Mammary epithelial cell (primary cell): ENCODE measurements at regions of chr17 and their contacts with region 1.

Region 1: DNA sequence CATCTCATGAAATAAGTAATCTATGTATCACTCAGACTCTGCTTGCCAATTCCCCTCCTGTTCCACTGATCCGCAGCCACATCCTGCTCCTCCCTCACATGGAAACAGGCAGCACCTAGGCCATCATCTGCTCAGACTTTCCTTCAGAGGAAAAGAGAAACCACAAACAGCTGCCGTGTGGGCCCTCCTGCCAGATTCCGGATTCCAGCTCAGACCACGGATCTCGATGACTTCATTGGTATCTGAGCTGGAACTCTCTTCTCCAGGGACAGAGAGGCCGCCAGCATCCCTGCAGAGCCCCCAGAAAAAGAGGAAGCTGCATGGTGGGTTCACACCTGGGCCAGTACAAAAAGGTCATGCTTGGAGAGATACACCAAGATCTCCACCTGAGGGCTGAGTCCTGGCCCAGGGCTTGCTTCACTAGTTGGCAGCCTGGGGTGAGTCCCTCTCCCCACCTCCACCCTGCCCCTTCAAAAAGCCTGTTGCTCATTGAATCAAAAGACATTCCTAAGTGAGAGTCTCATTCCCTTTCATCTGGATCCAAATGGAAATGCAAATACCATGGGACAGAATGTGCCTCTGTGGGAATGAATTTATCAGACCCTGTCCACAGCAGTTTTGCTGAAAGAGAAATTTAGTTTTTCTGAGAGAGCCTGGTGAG is 47.2 kb downstream of the HOXB1 start:
- DNase-seq: peak; percentile 99
- H3K4me3 ChIP-seq: no peak overlapping the region
- H3K27ac ChIP-seq: peak overlapping the region; percentile 83
- H3K4me1 ChIP-seq: peaks cover 65% of the 10 kb centered on the region
- H3K27me3 ChIP-seq: no peaks in the 10 kb centered on the region
- CTCF ChIP-seq: no peak

Region 2: DNA sequence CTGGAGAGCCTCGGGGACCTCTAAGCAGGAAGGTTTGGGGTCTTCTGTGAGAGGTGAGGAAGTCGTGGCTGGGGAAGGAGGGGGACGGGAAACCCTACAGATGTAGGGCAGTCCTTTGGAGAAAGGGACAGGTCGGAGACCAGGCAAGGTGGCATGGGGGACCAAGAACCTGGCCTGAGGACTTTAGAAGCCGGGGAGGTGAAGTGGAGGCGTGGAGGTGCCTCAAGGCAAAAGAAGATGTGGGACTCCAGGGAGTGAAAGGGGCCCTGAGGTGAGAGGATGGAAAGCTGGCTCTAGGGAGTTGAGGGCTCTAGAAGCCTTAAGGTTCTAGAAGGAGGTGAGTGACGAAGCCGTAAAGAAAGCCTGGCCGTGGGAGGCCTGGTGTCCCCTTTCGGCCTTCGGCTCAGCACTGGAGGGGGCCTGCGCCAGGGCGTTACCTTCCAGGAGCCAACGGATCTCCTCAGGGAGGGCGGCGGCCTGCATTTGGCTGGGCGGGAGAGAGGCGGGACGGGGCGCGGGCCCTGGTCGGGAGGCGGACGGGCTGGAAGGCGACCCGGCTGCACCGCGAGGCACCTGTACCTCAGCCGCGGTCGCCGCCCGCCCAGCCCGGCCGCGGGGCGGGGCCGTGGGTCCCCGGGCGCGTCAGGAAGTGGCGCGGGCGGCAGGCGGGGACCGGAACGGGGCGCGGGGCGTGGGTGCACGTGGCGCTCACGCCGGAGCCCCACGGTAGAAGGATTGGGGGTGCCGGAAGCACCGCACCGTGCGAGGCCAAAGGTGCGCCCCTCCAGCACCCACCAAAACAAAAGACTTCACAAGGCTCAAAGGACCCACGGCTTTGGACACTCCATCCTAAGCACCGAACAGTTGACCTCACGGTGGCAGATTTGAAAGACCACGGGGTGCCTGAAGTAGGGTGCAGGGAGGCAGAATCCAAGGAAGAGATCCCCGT is 53.7 kb before region 1 on chr17 and contains the start of gene SKAP1:
- CTCF ChIA-PET with region 1: no interaction called
- dilution Hi-C with region 1: no loop called
- in situ Hi-C with region 1: no loop called
- intact Hi-C with region 1: no loop called
- DNase-seq: no peak
- H3K4me3 ChIP-seq: peak within 1 kb of the TSS in 1 of 3 experiments; percentile 22
- H3K27ac ChIP-seq: no peak within 1 kb of the TSS
- H3K4me1 ChIP-seq: peaks cover 6% of the 10 kb centered on the region
- H3K27me3 ChIP-seq: peaks cover 3% of the 10 kb centered on the region
- CTCF ChIP-seq: no peak
- total RNA-seq, gene SKAP1: not detected

Region 3: DNA sequence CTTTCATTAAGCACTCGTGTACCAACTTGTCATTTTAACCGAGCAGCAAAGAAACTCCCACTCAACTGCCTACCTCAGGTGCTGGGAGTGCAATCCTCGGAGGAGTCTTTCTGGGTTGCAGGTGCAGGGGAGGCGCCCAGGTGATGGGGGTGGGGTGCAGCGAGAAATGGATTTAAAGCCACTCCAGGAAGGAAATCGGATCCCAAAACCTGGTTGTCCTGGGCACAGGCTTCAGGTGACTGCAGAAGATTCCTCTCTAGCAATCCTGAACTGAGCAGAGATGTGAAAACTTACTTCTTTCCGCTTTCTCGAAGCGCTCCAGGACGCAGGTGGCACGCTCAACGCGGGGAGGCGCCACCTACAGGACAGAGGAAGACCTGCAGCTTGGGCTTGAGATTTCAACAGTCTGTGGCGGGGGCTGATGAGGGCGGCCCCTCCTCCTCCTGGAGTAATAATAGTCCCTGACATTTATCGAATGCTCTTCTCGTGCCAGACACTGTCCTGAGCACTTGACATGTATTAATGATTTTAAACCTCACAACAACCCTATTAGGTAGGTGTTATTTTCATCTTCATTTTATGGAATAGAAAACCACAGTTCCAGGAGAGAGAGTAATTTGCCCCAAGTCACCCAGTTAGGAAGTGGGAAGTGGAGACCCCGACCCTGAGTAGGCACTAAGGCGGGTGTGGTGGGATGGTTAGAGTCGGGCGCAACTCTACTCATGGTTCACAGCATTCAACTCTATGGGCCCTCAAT is 26.3 kb before region 1 on chr17:
- CTCF ChIA-PET with region 1: no interaction called
- dilution Hi-C with region 1: no loop called
- in situ Hi-C with region 1: no loop called
- intact Hi-C with region 1: loop called (anchors 2 kb)
- DNase-seq: peak; percentile 42
- H3K4me3 ChIP-seq: peak overlapping the region in 2 of 3 experiments; percentile 19 to 28
- H3K27ac ChIP-seq: no peak overlapping the region
- H3K4me1 ChIP-seq: peaks cover 12% of the 10 kb centered on the region
- H3K27me3 ChIP-seq: no peaks in the 10 kb centered on the region
- CTCF ChIP-seq: peak; percentile 94

Region 4: DNA sequence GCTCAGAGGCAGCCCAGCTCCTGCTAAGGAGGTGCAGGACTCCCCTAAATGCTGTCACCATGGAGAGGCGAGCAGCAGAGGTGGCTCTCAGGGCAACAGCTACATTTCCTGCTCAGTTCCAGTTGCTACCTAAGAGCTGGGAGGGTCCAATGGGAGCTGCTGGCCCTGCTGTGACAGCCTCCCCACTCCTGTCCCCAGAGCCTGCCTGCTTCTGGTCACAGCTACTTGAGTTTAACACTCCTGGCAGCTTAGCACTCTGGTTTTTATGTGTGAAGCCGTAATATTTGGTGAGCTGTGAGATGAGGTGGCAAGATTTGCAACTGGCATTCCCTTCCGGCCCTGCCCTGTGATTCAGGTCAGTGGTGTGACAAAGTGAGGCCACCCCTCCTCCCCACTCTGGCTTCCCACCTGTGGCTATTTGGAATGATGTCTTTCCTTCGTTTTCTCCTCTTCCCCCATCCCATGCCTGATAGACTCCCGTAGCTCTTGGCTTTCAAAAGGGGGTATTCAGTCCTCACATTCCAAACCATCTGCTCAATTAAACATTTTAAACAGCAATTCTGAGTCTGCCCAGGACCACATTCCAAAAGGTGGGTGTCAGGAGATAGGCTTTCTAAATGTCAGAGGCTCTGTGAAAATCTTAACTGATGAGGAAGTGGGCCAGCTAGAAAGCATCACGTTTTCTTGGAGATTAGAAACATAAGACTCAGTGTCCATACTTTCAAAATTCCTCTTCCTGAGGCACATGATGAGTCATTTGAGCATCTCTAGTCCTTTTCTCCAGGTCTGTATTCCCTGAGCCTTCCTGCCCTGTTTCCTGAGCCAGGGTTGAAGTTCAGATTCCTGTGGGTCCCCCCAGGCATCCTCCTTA is 11.0 kb before region 1 on chr17:
- CTCF ChIA-PET with region 1: no interaction called
- dilution Hi-C with region 1: no loop called
- in situ Hi-C with region 1: no loop called
- intact Hi-C with region 1: loop called (anchors 1 kb)
- DNase-seq: peak; percentile 67
- H3K4me3 ChIP-seq: no peak overlapping the region
- H3K27ac ChIP-seq: peak overlapping the region; percentile 56
- H3K4me1 ChIP-seq: peaks cover 19% of the 10 kb centered on the region
- H3K27me3 ChIP-seq: no peaks in the 10 kb centered on the region
- CTCF ChIP-seq: no peak